Psoas muscle (tissue), 8 donors: ENCODE measurements at regions of chr10 and their contacts with region 1.

Region 1: GRCh38 chr10:92689663-92690210 is at the start of gene HHEX:
- DNase-seq: peak; percentile 59 to 67
- ATAC-seq: peak; percentile 63 to 74 (median 70)
- H3K4me3 ChIP-seq: peak within 1 kb of the TSS; percentile 70
- H3K27ac ChIP-seq: peak within 1 kb of the TSS; percentile 72
- H3K4me1 ChIP-seq: peaks cover 9% of the 10 kb centered on the region
- H3K27me3 ChIP-seq: peaks cover 0 to 62% (median 33%) of the 10 kb centered on the region in 3 donors
- CTCF ChIP-seq: no peak
- total RNA-seq, gene HHEX: 1.7 to 3.3 (median 2.6) TPM

Region 2: GRCh38 chr10:92816091-92816531 is 126.4 kb after region 1 on chr10:
- intact Hi-C with region 1: loop called in 1 of 2 experiments (anchors 10 kb)
- DNase-seq: no peak
- ATAC-seq: peak in 1 of 4 donors; percentile 21
- H3K4me3 ChIP-seq: no peak overlapping the region
- H3K27ac ChIP-seq: no peak overlapping the region
- H3K4me1 ChIP-seq: no peaks in the 10 kb centered on the region
- H3K27me3 ChIP-seq: peaks cover 0 to 3% (median 0%) of the 10 kb centered on the region in 3 donors
- CTCF ChIP-seq: no peak